Posterior cingulate gyrus (tissue), 11 donors: ENCODE measurements at regions of chr5 and their contacts with region 1.

Region 1: GRCh38 chr5:160021831-160022446 is 13.0 kb downstream of the TTC1 start:
- DNase-seq: peak in 3 of 10 donors; percentile 27 to 53 (median 33)

Region 2: DNA sequence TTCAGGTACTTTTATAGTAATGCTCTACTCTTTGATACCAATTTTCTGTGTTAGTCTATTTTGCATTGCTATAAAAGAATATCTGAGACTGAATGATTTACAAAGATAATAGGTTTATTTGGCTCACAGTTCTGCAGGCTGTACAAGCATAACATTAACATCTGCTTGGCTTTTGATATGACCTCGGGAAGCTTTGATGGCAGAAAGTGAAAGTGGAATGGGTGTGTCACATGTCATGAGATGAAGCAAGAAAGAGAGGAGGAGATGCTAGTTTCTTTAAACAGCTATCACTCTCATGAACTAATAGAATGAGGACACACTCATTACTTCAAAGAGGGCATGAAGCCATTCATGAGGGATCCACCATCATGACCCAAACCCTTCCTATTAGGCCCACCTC is 420.7 kb before region 1 on chr5:
- intact Hi-C with region 1: no loop called
- DNase-seq: no peak

Region 3: DNA sequence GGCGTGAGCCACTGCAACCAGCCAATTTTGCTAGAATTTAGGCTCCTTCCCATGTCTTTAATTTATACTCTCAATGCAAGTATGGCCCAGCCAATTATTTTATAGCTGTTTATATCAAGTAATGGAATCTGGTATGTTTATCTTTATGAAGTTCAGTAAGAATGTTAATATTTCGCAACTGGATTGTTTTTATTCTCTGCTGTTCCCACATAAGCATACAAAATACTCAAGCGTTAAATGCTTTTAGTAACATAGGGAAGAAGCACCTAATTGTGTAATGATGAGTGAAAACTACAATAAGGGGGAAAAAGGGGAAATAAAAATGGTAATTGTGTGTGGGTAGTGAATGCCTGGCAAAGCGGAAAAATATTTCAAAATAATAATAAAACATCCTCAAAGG is 76.1 kb after region 1 on chr5:
- intact Hi-C with region 1: no loop called
- DNase-seq: no peak

Region 4: DNA sequence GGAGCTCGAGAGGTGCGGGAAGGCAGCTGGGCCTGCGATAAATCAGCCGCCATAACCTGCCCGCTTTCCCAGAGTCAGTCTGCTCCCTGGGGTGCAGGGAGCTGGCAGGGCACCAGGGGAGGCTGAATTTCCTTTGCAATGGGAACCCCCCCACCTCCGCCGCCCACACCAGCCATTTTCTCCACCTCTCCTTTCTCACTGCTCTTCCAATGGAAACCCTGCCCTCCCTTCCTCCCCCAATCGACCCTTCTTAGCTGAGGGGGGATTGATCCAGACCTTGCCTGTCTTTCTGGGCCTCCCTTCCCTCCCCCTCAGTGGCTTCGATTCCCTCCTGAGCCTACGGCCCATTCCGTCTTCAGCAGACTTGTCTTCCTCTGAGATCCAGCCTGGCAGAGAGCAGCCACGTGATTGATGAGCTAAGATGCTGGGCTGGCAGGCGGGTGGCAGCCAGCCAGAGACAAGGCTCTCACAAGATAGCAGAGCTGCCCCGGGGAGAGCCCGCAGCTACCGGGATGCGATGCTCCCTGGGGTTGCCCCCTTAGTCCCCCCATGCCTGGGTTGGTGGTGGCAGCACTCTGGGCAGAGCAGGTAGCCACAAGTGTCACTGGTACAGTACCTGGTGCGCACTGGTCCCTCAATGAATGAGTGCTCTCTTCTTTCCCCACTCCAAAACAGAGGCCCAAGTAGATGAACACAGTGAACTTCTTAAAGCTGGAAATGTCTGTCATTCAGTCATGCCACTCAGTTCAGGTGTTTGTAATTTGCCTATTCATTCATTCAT is 153.7 kb after region 1 on chr5:
- intact Hi-C with region 1: loop called (anchors 5 kb)
- DNase-seq: peak; percentile 67 to 98 (median 84)

Region 5: DNA sequence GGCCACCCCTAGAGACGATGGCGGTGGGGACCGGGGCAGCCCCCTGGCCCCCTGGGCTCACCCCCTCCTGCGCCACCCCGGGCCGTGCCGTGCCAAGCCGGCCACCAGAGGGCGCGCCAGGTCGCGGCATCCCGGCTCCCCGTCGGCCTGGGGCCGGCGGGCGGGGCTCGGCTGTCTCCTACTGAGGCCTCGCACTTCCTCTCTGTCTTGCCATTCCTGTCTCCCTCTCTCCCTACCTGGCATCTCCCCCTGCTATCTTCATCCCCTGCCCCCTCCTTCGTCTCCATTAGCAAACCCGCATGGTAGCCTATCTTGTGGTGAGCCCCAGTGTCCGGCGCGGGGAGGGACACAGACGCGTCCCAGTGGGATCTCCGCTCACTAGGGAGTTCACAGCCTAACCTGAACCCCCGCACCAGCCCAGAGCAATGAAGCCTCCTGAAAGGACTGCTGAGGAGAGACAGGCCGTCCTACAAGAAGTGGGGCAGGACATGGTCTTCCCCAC is 177.5 kb after region 1 on chr5:
- intact Hi-C with region 1: loop called (anchors 5 kb)
- DNase-seq: peak; percentile 34 to 97 (median 72)

Region 6: GRCh38 chr5:160342403-160342941 is 320.5 kb after region 1 on chr5:
- intact Hi-C with region 1: loop called (anchors 1 kb)
- DNase-seq: peak in 1 of 10 donors; percentile 63

Region 7: GRCh38 chr5:160390787-160391696 is 369.1 kb after region 1 on chr5:
- intact Hi-C with region 1: loop called (anchors 2 kb)
- DNase-seq: no peak